ENCODE measurements at regions of chr21 and their contacts with region 1.

Region 1: DNA sequence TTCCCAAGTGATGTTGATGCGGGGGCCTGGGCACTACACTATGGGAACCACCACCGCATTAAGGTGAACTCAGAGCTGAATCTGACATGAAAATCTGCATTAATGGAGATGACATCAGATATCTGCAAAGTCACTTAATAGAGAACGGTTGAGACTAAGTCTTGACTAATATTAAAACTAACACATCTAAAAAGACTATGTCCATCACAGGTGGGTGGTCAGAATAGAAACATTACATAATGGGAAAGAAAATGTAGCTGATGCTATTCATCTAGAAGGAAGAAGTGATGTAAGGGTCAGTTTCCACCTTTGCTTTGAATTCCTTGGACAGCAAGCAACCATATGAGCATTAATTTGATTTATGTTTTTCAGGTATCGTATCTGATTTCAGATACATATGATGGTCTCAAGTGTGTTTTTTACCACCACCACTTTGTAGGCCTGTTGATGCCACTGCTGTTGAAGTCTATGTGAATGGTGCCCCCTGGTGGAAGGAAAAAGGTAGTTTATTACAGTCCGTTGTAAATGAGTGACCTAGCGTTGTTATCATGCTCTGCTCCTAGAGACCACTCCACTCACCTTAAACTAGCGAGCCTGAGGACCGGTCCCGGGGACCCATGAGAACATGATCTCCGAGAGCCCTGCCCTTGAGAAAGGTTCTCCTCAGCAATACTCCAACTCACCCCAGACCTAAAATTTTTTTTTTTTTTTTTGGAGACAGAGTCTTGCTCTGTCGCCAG is 73.5 kb downstream of the BACH1 start:
- DNase-seq: peak; percentile 64 to 72
- H3K4me3 ChIP-seq: no peak overlapping the region
- H3K4me1 ChIP-seq: no peaks in the 10 kb centered on the region
- H3K27me3 ChIP-seq: no peaks in the 10 kb centered on the region

Region 2: DNA sequence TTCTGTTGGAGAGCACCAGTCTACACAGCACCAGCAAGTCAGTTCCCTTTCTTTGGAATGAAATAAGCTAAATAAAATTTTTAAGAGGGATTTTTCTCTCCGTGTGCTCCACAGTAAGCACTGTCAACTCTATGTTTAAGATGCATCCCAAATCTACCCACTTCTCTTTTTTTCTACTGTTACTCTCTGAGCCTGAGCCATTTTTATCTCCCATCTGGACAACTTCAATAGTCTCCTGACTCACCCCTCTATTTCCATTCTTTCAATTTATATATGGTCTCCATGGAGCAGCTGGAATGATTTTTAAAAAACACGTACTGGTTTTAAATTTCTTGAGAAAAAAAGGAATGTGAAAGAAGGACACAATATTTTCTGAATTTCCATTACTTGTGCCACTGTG is 274.1 kb before region 1 on chr21:
- in situ Hi-C with region 1: loop called (anchors 5 kb)
- DNase-seq: no peak
- H3K4me3 ChIP-seq: no peak overlapping the region
- H3K4me1 ChIP-seq: no peaks in the 10 kb centered on the region
- H3K27me3 ChIP-seq: no peaks in the 10 kb centered on the region